Aorta (tissue), 5 donors: ENCODE measurements at regions of chr14 and their contacts with region 1.

Region 1: DNA sequence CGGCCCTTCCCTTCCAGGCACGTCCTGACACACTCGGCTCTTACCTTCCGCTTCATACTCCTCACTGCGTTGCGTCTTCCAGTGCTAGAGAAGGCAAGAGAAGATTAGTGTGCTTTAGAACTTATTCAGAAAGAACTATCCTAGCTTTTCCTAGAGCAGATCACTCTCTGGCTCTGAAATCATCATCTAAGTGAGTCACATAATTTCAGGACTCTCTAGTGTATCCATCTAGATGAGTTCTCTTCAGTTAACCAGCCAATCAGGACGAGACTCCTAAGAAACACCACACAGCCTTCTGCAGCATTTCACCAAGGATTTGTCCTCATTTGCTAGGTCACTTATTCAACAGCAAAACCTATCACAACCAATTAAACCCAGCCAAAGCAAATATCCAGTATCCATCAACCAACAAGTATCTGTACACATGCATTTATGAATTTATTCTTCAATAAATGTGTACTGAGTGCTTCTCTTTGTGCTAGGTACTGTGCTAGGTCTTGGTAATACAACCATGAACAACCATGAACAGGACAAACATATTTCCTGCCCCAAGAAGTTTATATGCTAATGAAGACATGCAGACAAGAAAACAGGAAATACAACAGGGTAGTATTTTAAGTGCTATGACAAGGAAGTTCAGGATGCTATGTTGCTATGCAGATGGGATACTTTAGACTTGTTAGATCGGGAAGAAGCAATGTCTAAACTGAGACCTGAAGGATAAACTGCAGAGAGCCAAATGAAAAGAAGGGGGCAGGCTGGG is 52.1 kb downstream of the NIN start:
- DNase-seq: no peak
- ATAC-seq: no peak
- H3K4me3 ChIP-seq: no peak overlapping the region
- H3K27ac ChIP-seq: no peak overlapping the region
- H3K4me1 ChIP-seq: peaks cover 2 to 3% of the 10 kb centered on the region in 2 donors
- H3K27me3 ChIP-seq: no peaks in the 10 kb centered on the region

Region 2: GRCh38 chr14:50342221-50343078 is 436.5 kb before region 1 on chr14:
- intact Hi-C with region 1: no loop called
- DNase-seq: no peak
- ATAC-seq: peak; percentile 78
- H3K4me3 ChIP-seq: no peak overlapping the region
- H3K27ac ChIP-seq: no peak overlapping the region
- H3K4me1 ChIP-seq: no peaks in the 10 kb centered on the region
- H3K27me3 ChIP-seq: no peaks in the 10 kb centered on the region

Region 3: DNA sequence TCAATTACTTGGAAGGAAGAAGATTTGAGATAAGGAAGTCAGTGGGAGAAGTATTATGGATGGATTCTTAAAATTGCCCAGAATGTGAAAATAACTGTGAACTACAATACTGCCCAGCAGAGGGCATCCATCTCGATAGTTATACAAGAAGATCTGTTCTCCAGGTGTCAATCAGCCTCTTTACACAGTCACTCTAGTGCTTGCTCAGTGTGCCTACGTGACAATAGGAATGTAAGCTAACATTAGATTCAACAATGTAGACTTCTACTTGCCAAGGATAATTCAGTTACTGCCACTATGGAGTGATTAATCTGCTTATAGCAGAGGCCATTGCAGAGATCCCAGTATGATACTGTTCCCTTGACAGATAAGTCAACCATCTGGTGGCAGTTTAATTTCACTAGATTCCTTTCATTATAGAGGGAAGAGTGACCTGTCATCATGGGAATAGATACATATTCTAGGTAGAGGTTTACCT is 235.9 kb before region 1 on chr14:
- intact Hi-C with region 1: loop called (anchors 2 to 5 kb)
- DNase-seq: no peak
- ATAC-seq: peak; percentile 59
- H3K4me3 ChIP-seq: no peak overlapping the region
- H3K27ac ChIP-seq: no peak overlapping the region
- H3K4me1 ChIP-seq: no peaks in the 10 kb centered on the region
- H3K27me3 ChIP-seq: no peaks in the 10 kb centered on the region